ENCODE measurements at regions of chr19 and their contacts with region 1.

Region 1: GRCh38 chr19:45862564-45863334 is at the start of gene SYMPK:
- DNase-seq: peak; percentile 98 to 99 (median 98)
- H3K4me3 ChIP-seq: peak within 1 kb of the TSS; percentile 88
- H3K4me3 Mint-ChIP-seq: peak within 1 kb of the TSS; percentile 88 to 96 (median 92)
- H3K27ac ChIP-seq: peak within 1 kb of the TSS; percentile 82
- H3K27ac Mint-ChIP-seq: peak within 1 kb of the TSS; percentile 84 to 99 (median 93)
- H3K4me1 ChIP-seq: peaks cover 16% of the 10 kb centered on the region
- H3K4me1 Mint-ChIP-seq: peaks cover 27 to 41% (median 28%) of the 10 kb centered on the region in 3 donors
- H3K27me3 ChIP-seq: peaks cover 4% of the 10 kb centered on the region
- H3K27me3 Mint-ChIP-seq: peaks cover 12 to 18% of the 10 kb centered on the region in 2 donors
- total RNA-seq, gene SYMPK: 116 to 119 TPM

Region 2: GRCh38 chr19:45886427-45887199 is 23.9 kb after region 1 on chr19:
- CTCF ChIA-PET with region 1: interaction called, 10 read pairs
- POLR2A ChIA-PET with region 1: interaction called, 22 read pairs
- DNase-seq: peak; percentile 81 to 92 (median 90)
- H3K4me3 ChIP-seq: peak overlapping the region; percentile 92
- H3K4me3 Mint-ChIP-seq: peak overlapping the region; percentile 92 to 99 (median 96)
- H3K27ac ChIP-seq: peak overlapping the region; percentile 83
- H3K27ac Mint-ChIP-seq: peak overlapping the region; percentile 92 to 99 (median 99)
- H3K4me1 ChIP-seq: peaks cover 34% of the 10 kb centered on the region
- H3K4me1 Mint-ChIP-seq: peaks cover 16 to 36% (median 22%) of the 10 kb centered on the region in 3 donors
- H3K27me3 ChIP-seq: no peaks in the 10 kb centered on the region
- H3K27me3 Mint-ChIP-seq: peaks cover 0 to 3% of the 10 kb centered on the region in 2 donors

Measured in CD8-positive, alpha-beta memory T cell (primary cell).